PC-3 (cell line): ENCODE measurements at regions of chr18 and their contacts with region 1.

Region 1: DNA sequence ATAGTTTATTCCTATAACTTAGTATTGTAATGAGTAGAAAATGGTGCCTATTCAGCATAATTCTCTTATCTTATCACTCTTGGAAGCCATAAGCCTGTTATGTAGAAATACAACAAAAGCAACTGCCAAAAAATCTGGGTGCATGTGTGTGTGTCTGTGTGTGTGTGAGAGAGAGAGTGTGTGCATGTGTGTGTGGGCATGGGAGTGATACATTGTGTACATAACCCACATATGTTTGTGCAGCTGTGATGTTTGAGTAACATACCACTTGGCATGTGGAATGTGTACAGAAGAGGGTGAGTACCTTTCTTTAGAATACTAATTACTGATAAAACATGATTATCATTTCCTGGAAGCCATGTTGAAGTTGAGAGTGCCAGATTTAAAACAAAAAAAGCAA is 642.3 kb upstream of the SYT4 start:
- DNase-seq: peak; percentile 14
- ATAC-seq: peak; percentile 58
- H3K4me3 ChIP-seq: no peak overlapping the region
- H3K27ac ChIP-seq: no peak overlapping the region
- H3K4me1 ChIP-seq: peaks cover 13% of the 10 kb centered on the region
- H3K27me3 ChIP-seq: no peaks in the 10 kb centered on the region
- CTCF ChIP-seq: no peak

Region 2: GRCh38 chr18:43797347-43797746 is 122.2 kb before region 1 on chr18:
- CTCF ChIA-PET with region 1: no interaction called
- POLR2A ChIA-PET with region 1: no interaction called
- intact Hi-C with region 1: loop called (anchors 5 kb)
- DNase-seq: peak; percentile 14
- ATAC-seq: peak; percentile 76
- H3K4me3 ChIP-seq: no peak overlapping the region
- H3K27ac ChIP-seq: no peak overlapping the region
- H3K4me1 ChIP-seq: 0 out of 2 replicates have a peak, but pooled peaks cover 3% of the 10 kb centered on the region
- H3K27me3 ChIP-seq: no peaks in the 10 kb centered on the region
- CTCF ChIP-seq: no peak

Region 3: DNA sequence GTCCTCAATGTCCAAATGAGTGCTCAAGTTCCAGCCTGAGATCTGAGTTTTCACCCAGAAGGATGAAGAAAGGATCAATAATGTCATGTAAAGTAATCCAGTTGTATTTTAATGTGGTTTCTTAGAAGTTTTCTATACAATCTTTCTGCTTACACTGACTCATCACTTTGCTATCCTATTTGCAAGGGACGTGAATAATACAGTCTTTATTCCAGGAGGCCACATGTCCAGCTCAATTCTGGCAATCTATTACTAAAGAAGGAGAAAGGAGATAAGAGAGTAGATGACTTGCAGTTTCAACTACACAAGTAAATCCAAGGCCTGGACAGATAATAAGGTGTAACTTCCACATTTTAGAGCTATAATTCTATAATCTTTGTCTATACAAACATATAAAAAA is 160.1 kb after region 1 on chr18:
- CTCF ChIA-PET with region 1: no interaction called
- POLR2A ChIA-PET with region 1: no interaction called
- intact Hi-C with region 1: loop called (anchors 10 kb)
- DNase-seq: peak; percentile 57
- ATAC-seq: peak; percentile 93
- H3K4me3 ChIP-seq: no peak overlapping the region
- H3K27ac ChIP-seq: peak overlapping the region; percentile 21; the same call in 1 of the 2 replicates
- H3K4me1 ChIP-seq: peaks cover 10% of the 10 kb centered on the region
- H3K27me3 ChIP-seq: no peaks in the 10 kb centered on the region
- CTCF ChIP-seq: no peak